Activated CD8-positive, alpha-beta memory T cell treated with anti-CD3 and anti-CD28 coated beads, Interleukin-2, amount 10 ng/mL, durations not matched to agents 7 days and 5 days (primary cell): ENCODE measurements at regions of chr12 and their contacts with region 1.

Region 1: GRCh38 chr12:31267966-31268365 is 58.0 kb downstream of the SINHCAF start:
- DNase-seq: no peak
- ATAC-seq: no peak
- H3K4me3 Mint-ChIP-seq: no peak overlapping the region
- H3K27ac Mint-ChIP-seq: no peak overlapping the region
- H3K4me1 Mint-ChIP-seq: peaks cover 2% of the 10 kb centered on the region
- H3K27me3 Mint-ChIP-seq: no peaks in the 10 kb centered on the region

Region 2: GRCh38 chr12:30847259-30847658 is 420.7 kb before region 1 on chr12:
- CTCF ChIA-PET with region 1: interaction called, 26 read pairs
- DNase-seq: no peak
- ATAC-seq: peak; percentile 45
- H3K4me3 Mint-ChIP-seq: no peak overlapping the region
- H3K27ac Mint-ChIP-seq: no peak overlapping the region
- H3K4me1 Mint-ChIP-seq: peaks cover 6% of the 10 kb centered on the region
- H3K27me3 Mint-ChIP-seq: peaks cover 2% of the 10 kb centered on the region

Region 3: DNA sequence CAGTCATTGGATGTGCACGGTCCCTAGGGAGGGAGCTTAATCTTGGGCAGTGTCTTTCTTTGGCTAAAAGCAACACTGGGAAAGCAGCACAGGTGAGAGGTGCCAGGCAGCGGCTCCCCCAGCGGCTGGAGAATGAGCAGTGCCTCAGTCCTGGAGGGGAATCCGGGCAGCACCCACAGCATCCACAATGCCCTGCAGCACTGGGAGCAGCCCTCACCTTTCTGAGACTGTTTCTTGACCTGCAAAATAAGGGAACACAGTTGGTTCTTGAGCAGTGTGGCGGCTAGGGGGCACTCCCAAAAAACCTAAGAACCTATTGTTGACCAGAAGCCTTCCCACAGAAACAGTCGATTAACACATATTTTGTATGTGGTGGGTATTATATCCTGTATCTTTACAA is 17.8 kb before region 1 on chr12:
- CTCF ChIA-PET with region 1: interaction called, 30 read pairs
- DNase-seq: no peak
- ATAC-seq: no peak
- H3K4me3 Mint-ChIP-seq: no peak overlapping the region
- H3K27ac Mint-ChIP-seq: no peak overlapping the region
- H3K4me1 Mint-ChIP-seq: no peaks in the 10 kb centered on the region
- H3K27me3 Mint-ChIP-seq: peaks cover 18% of the 10 kb centered on the region

Region 4: GRCh38 chr12:31308116-31308515 is 40.1 kb after region 1 on chr12:
- CTCF ChIA-PET with region 1: interaction called, 11 read pairs
- DNase-seq: no peak
- ATAC-seq: no peak
- H3K4me3 Mint-ChIP-seq: no peak overlapping the region
- H3K27ac Mint-ChIP-seq: no peak overlapping the region
- H3K4me1 Mint-ChIP-seq: peaks cover 12% of the 10 kb centered on the region
- H3K27me3 Mint-ChIP-seq: no peaks in the 10 kb centered on the region

Region 5: DNA sequence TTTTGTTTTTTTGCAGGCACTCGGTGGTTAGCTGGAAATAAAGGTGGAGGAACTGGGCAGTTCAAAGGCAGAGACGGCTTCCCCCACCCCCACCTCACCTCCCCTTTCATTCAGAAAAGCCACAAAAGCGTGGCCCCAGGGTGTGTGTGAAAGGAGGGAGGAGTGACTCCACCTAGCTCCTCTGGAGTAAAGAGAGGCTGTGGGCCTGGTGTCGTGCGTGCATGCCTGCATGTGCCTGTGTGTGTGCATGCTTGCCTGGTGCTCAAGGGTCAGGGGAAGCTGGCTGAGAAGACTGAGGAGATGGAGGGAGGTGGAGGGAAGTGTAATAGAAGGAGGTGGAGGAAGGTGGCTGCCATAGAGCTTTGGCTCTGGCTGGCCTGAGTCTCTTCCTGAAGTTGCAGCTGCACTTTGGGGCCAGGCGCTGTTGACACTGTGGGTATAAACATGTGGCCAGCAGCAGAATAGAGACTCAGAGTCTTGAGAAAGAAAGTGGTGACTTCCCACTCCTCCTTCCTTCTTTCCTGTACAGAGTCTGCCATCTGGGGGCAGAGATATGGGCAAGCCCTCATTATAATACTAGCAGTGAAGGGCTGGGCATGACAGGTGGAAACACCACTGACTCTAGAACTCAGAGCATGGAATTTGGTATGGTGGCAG is 94.9 kb after region 1 on chr12:
- CTCF ChIA-PET with region 1: interaction called, 16 read pairs
- DNase-seq: peak; percentile 73
- ATAC-seq: peak; percentile 85
- H3K4me3 Mint-ChIP-seq: peak overlapping the region; percentile 37
- H3K27ac Mint-ChIP-seq: peak overlapping the region; percentile 81
- H3K4me1 Mint-ChIP-seq: peaks cover 21% of the 10 kb centered on the region
- H3K27me3 Mint-ChIP-seq: no peaks in the 10 kb centered on the region